ENCODE measurements at regions of chr1 and their contacts with region 1.

Region 1: GRCh38 chr1:110339407-110340206 is 430 bp downstream of the RBM15 start:
- DNase-seq: peak; percentile 67
- H3K4me3 ChIP-seq: peak overlapping the region; percentile 85
- H3K27ac ChIP-seq: peak overlapping the region; percentile 99
- H3K4me1 ChIP-seq: peaks cover 24% of the 10 kb centered on the region
- H3K27me3 ChIP-seq: no peaks in the 10 kb centered on the region
- CTCF ChIP-seq: no peak

Region 2: DNA sequence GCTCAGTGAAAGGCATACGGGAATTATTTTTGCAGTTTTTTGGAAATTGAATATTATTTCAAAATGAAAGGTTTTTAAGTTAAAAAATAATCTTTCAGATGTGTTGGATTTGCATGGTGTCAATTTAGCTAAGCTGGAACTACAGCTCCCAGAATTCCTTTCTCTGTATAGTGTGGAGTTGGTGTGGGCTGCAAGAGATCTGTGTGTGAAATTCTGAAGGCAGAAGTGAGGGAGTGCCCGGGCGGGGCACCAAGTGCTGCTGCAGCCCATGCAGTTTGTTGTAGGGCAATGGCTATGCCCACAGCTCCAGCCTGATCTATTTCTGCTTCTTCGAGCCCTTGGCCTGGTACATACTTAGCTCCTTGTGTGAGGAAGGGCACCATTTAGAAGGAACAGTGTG is 489.4 kb before region 1 on chr1:
- intact Hi-C with region 1: no loop called
- DNase-seq: no peak
- H3K4me3 ChIP-seq: no peak overlapping the region
- H3K27ac ChIP-seq: no peak overlapping the region
- H3K4me1 ChIP-seq: no peaks in the 10 kb centered on the region
- H3K27me3 ChIP-seq: no peaks in the 10 kb centered on the region
- CTCF ChIP-seq: no peak

Region 3: GRCh38 chr1:110155878-110156522 is 183.6 kb before region 1 on chr1:
- intact Hi-C with region 1: no loop called
- DNase-seq: peak; percentile 42
- H3K4me3 ChIP-seq: no peak overlapping the region
- H3K27ac ChIP-seq: no peak overlapping the region
- H3K4me1 ChIP-seq: no peaks in the 10 kb centered on the region
- H3K27me3 ChIP-seq: peaks cover 6% of the 10 kb centered on the region
- CTCF ChIP-seq: no peak

Region 4: GRCh38 chr1:110407260-110408210 is 67.9 kb after region 1 on chr1 and contains the start of gene LAMTOR5:
- intact Hi-C with region 1: loop called (anchors 5 kb)
- DNase-seq: peak; percentile 97
- H3K4me3 ChIP-seq: peak within 1 kb of the TSS; percentile 87
- H3K27ac ChIP-seq: peak within 1 kb of the TSS; percentile 93
- H3K4me1 ChIP-seq: peaks cover 6% of the 10 kb centered on the region
- H3K27me3 ChIP-seq: no peaks in the 10 kb centered on the region
- CTCF ChIP-seq: no peak
- total RNA-seq, gene LAMTOR5: 130 to 146 TPM